ENCODE measurements at regions of chr9 and their contacts with region 1.

Region 1: DNA sequence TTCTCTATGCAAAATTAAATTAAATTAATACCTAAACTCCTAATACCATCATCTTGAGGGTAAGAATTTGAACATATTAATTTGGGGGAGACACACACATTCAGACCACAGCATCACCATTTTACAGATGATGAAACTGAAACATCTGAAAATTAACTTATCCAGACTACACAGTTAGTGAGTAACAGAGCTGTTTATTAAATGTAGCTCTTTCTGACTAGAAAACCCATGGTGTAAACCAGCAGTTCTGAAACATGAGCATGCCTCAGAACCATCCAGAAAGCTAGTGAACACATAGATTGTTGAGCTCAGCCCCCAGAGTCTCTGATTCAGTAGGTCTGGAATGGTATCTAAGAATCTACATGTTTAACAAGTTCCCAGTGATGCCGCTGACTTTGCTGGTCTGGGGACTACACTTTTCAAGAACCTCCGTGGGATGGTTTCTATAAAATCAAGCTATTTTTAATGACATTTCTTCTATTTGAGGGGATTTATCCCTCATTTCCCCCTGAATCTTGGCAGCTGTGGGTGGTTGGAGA is 113.5 kb downstream of the RORB start:
- DNase-seq: no peak
- H3K4me3 ChIP-seq: no peak overlapping the region
- H3K27ac ChIP-seq: no peak overlapping the region
- H3K27me3 ChIP-seq: no peaks in the 10 kb centered on the region
- CTCF ChIP-seq: no peak

Region 2: DNA sequence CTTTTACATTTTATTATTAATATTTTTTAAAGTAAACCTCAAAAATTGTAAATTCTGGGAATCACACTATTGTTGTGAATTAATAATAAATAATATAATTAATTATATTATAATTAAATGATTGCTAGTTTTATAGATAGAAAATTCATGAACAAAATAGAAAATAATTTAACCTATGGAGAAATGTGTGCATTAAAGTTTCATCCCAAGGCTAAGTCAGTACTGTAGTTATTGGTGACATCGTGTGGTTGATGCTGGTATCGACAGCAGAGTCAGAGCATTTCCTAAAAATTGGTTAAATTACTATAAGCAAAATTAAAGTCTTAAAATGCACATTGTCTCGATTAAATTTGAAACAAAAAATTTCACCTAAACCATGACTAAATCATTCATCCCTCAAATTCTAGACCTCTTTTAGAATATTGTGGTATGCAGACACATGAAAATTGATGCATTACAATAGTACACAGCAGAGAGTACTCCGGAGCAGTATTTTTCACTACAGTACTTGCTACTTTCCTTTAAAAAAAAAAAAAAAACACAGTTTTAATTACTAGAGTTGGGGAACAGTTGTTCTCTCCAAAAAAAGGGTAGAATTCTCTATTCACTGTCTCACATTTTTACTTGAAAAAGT is 39.6 kb before region 1 on chr9:
- CTCF ChIA-PET with region 1: interaction called, 10 read pairs
- POLR2A ChIA-PET with region 1: no interaction called
- DNase-seq: no peak
- H3K4me3 ChIP-seq: no peak overlapping the region
- H3K27ac ChIP-seq: no peak overlapping the region
- H3K27me3 ChIP-seq: no peaks in the 10 kb centered on the region
- CTCF ChIP-seq: peak; percentile 73

Measured in AG04450 (cell line).